PC-9 (cell line): ENCODE measurements at regions of chr5 and their contacts with region 1.

Region 1: GRCh38 chr5:96924016-96924443 is 11.8 kb upstream of the LNPEP start:
- DNase-seq: no peak
- H3K4me3 ChIP-seq: no peak overlapping the region
- H3K27ac ChIP-seq: no peak overlapping the region
- H3K4me1 ChIP-seq: no peaks in the 10 kb centered on the region
- H3K27me3 ChIP-seq: no peaks in the 10 kb centered on the region
- CTCF ChIP-seq: no peak

Region 2: GRCh38 chr5:95486191-95486590 is 1437.8 kb before region 1 on chr5:
- CTCF ChIA-PET with region 1: interaction called, 10 read pairs
- POLR2A ChIA-PET with region 1: no interaction called
- intact Hi-C with region 1: no loop called
- DNase-seq: no peak
- H3K4me3 ChIP-seq: no peak overlapping the region
- H3K27ac ChIP-seq: no peak overlapping the region
- H3K4me1 ChIP-seq: no peaks in the 10 kb centered on the region
- H3K27me3 ChIP-seq: no peaks in the 10 kb centered on the region
- CTCF ChIP-seq: no peak